MCF 10A (cell line): ENCODE measurements at regions of chr17 and their contacts with region 1.

Region 1: GRCh38 chr17:58112970-58113631 is 29.9 kb downstream of the DYNLL2 start:
- DNase-seq: peak; percentile 81
- H3K4me3 Mint-ChIP-seq: no peak overlapping the region
- H3K27ac Mint-ChIP-seq: no peak overlapping the region
- H3K4me1 Mint-ChIP-seq: no peaks in the 10 kb centered on the region
- H3K27me3 Mint-ChIP-seq: peaks cover 16% of the 10 kb centered on the region
- CTCF ChIP-seq: peak; percentile 93

Region 2: DNA sequence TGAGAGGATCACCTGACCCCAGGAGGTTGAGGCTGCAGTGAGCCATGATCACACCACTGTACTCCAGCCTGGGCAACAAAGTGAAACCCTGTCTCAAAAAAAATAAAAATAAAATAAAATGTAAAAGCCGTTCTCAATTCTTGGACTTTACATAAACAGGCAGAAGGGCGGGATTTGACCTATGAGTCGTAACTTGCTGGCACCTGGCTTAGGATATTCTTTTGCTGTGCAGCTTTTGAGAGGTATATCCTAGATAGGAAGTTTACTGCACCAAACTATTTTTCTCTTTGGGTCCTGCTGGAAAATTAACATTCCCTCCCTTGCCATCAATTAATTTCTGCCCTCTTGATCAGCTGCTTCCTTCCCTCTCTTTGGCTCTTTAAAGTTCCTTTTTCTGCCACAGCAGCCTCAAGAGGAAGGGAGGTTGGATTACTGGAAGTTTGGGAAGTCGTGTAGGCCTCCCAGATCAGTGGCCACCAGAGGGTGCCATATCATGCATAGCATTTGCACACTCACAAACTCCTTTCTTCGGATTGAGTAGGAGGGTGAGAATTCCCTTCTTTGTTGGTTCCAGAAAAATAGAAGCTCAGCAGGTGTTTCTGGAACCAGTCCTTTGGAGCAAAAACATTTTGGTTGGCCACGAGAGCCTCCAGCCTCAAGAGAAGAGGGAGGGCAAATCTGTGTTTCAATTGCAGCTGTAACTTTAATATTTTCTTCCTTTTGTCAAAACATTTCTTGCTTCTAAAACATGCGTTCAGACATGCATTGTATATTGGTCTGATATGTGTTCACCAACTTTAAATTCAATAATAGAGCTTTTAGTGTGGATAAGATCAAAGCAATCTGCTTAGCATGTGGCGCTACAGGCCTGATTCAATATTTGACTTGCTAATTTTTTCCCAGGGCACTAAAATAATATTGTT is 515.3 kb before region 1 on chr17:
- CTCF ChIA-PET with region 1: no interaction called
- POLR2A ChIA-PET with region 1: no interaction called
- intact Hi-C with region 1: loop called (anchors 2 kb)
- DNase-seq: peak; percentile 70
- H3K4me3 Mint-ChIP-seq: no peak overlapping the region
- H3K27ac Mint-ChIP-seq: peak overlapping the region; percentile 29
- H3K4me1 Mint-ChIP-seq: peaks cover 8% of the 10 kb centered on the region
- H3K27me3 Mint-ChIP-seq: no peaks in the 10 kb centered on the region
- CTCF ChIP-seq: peak; percentile 55

Region 3: GRCh38 chr17:57855391-57856035 is 257.6 kb before region 1 on chr17:
- CTCF ChIA-PET with region 1: interaction called, 14 read pairs
- POLR2A ChIA-PET with region 1: interaction called, 4 read pairs
- intact Hi-C with region 1: loop called (anchors 1 kb)
- DNase-seq: no peak
- H3K4me3 Mint-ChIP-seq: no peak overlapping the region
- H3K27ac Mint-ChIP-seq: peak overlapping the region; percentile 3
- H3K4me1 Mint-ChIP-seq: peaks cover 38% of the 10 kb centered on the region
- H3K27me3 Mint-ChIP-seq: no peaks in the 10 kb centered on the region
- CTCF ChIP-seq: no peak

Region 4: DNA sequence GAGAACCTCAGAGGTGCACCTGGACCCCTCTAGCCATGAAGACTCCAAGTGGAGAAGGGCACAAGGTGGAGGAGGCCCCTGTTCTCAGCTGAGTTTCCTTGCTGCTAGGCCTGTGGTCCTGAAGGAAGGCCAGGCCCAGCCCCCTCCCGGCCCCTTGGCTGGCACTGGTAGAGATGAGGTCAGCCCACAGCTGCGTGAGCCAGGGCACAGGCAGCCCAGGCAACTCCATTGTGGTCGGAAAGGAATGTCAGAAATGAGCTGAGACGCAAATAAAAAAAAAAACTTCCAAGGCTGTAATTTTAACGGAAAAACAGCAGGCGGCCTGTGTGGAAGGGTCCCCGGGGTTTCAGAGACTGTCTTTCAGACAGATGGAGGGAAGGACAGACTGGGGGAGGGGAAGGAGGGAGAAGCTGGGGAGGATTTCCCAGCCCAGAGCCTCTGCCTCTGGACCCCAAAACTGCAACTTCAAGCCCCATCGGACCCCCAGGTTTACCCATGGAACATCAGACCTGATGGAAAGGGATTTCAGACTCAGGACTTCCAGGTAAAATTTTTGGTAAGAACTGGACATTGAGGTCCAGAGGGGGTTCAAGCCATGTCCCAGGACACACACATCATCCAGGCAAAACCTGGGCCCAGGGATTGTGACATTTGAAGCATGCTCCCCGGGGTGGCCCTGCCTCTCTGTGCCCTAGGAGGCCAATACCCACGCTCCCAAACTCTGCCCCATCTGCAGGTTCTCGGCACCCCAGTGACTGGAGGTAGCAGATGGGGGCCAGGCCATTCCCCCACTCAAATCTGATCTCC is 237.6 kb before region 1 on chr17:
- CTCF ChIA-PET with region 1: interaction called, 3 read pairs
- POLR2A ChIA-PET with region 1: no interaction called
- intact Hi-C with region 1: loop called (anchors 1 kb)
- DNase-seq: peak; percentile 94
- H3K4me3 Mint-ChIP-seq: peak overlapping the region; percentile 41
- H3K27ac Mint-ChIP-seq: peak overlapping the region; percentile 51
- H3K4me1 Mint-ChIP-seq: peaks cover 45% of the 10 kb centered on the region
- H3K27me3 Mint-ChIP-seq: no peaks in the 10 kb centered on the region
- CTCF ChIP-seq: peak; percentile 52

Region 5: DNA sequence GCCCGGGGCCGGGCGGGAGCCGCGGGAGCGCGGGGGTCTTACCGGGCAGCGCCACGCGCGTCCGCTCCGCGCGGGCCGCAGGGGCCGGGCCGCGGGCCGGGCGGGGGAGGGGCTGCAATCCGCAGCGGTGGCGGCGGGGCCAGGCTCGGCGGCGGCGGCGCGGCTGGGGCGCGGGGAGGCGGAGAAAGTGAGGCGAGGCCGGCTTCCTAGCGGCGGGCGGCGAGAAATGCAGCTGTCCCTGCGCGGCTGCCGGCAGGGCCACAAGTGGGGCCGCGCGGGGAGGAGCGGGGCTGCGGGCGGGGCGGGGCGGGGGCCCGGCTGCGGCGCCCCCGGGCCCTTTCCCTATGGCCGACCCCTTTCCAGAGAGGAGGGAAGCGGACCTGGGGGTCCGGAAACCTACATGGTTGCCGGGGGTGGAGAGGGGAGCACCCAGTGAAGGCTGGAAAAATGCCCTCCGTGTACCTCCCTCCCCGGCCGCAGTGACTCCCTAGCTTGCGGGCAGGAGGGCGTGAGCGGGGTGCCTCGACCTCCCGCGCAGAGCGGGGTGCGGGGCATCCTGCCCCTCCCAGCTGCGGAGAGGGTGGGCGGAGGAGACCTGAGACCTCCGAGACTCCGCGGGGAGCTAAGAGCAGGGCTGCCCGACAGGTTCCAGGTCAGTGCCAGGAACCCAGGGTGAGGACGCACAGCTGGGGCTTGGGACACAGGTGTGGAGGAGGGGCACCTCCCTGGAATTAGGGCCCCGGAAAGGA is 157.7 kb before region 1 on chr17 and contains the start of gene CUEDC1:
- CTCF ChIA-PET with region 1: no interaction called
- POLR2A ChIA-PET with region 1: no interaction called
- intact Hi-C with region 1: no loop called
- DNase-seq: peak; percentile 53
- H3K4me3 Mint-ChIP-seq: peak within 1 kb of the TSS; percentile 70
- H3K27ac Mint-ChIP-seq: no peak within 1 kb of the TSS
- H3K4me1 Mint-ChIP-seq: peaks cover 22% of the 10 kb centered on the region
- H3K27me3 Mint-ChIP-seq: no peaks in the 10 kb centered on the region
- CTCF ChIP-seq: peak; percentile 23
- total RNA-seq, gene CUEDC1: 15.6 and 21.5 TPM in 2 replicates

Region 6: DNA sequence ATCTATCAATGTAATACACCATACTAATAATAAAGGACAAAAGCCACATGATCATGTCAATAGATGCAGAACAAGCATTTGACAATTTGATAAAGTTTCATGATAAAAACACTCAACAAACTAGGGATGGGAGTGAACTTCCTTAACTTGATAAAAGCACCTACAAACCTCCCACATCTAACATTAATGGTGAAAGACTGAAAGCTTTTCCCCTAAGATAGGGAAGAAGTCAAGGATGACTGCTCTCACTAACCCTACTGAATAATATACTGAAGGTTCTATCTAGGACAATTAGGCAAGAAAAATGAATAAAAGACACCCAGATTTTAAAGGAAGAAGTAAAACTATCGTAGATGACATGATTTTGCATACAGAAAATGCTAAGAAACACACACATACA is 40.2 kb before region 1 on chr17:
- CTCF ChIA-PET with region 1: no interaction called
- POLR2A ChIA-PET with region 1: no interaction called
- intact Hi-C with region 1: no loop called
- DNase-seq: no peak
- H3K4me3 Mint-ChIP-seq: no peak overlapping the region
- H3K27ac Mint-ChIP-seq: no peak overlapping the region
- H3K4me1 Mint-ChIP-seq: no peaks in the 10 kb centered on the region
- H3K27me3 Mint-ChIP-seq: peaks cover 66% of the 10 kb centered on the region
- CTCF ChIP-seq: no peak